Cardiac septum (tissue), 1 donor: ENCODE measurements at regions of chr2 and their contacts with region 1.

Region 1: DNA sequence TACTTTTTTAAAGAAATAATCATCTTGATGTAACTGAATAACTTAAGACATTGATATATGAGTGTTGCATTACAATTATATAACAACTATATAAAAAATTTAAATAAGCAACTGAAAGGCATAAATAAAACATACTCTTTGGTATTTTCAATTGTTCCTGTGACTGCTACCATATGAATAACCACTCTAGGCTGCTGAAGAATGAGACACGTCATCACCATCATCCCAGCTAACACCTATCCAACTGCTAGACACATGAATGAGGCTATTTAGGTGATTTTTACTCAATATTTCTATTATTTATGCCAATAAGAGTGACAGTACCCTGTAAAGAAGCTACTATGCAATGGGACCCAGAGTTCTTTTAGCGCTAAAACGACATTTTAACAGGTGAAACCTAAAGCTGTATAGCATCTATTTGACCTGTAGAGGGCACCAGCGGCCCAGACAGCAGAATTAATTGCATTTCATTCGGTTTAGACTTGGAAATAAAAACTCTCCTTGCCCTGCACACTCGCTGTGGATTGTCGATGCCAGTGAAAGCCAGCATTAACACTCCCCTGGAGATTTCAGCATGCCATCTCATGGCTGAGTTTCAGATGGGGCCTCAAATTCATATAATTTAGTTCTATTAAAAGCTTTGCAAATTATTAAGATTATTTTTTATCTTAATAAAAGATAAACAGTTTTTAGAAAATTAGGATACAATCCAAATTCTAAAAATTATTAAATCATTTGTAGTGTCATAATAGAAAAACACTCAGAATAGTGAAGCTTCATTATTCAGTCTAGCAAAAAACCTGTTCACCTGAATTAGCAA is 89.4 kb upstream of the MAP2 start:
- DNase-seq: no peak

Region 2: DNA sequence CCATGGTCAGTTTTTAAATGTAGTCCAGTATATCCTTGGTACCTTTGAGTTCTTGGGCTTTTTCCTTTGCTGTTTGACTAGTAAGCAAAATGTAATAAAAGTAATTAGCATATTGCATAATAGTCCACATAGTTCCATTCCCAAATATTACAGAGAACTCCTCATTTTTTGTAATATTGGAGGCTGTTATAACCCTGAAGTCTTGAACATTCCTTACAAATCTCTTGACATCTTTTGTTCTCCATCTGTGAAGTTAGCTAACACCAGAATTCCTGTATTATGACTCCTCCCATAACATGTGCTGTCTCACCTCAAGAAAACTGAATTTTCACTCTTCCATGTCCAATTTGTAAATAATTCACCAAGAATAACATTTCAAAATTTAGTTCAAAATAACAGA is 1787.6 kb before region 1 on chr2:
- intact Hi-C with region 1: no loop called
- DNase-seq: no peak

Region 3: DNA sequence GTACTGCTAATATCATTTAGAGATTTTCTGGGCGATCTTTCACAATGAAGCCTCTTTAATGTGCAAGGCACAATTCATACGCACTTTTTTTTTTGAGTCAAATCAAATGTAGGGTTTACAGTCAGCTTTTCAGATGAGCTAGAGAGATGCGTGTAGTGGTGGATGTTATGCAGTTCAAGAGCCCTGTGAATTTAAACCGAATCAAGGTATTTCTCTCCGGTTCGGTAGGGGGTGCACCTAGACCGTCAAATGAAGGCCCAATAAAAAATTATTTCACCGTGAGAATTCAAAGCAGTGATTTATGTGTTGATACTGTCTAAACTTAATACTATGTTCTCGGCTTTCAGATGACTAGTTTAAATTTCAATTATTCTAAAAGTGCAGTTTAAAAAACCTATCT is 926.7 kb before region 1 on chr2:
- intact Hi-C with region 1: loop called (anchors 10 kb)
- DNase-seq: no peak

Region 4: GRCh38 chr2:209556354-209556961 is 222.1 kb after region 1 on chr2:
- intact Hi-C with region 1: loop called (anchors 5 kb)
- DNase-seq: no peak

Region 5: DNA sequence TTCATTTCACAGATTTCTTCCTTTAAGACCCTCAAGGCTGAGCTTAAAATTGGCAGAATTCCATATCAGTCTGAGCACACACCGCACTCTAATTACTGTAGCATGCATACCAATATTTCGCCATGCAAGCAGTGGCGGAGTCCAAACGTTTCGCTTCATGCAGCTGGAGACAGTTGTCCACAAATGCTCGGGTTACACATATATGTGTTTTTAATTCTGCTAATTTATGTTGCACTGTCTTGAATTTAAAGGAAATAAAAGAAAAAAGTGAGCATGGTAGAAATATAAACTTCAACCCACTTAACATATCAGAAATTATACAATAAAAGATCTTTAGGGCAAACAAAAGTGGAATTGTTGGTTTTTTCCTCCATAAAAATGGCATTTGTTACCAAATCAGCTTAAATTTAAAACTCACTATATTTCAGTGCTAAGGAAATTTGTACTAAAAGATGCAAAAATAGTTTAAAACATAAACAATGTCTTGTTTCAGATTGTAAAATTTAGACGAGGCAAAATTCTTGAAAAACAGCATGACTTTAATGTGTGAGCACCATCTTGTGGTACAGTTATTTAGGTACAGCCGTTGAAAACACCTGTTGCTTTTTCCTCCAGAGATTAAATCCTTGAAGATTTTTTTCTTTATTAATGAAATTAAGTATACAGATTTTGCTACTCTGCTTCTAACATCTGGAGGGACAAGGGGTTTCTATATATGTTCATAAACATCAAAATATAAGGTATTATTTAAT is 860.9 kb after region 1 on chr2:
- intact Hi-C with region 1: loop called (anchors 5 kb)
- DNase-seq: no peak